Activated T-helper 2 cell treated with anti-CD3 and anti-CD28 coated beads, Interferon-gamma antibody, Interleukin-2, Interleukin-4, amounts not matched to agents 10 μg/mL and 5 μg/mL and 100 μg/mL, durations not matched to agents 14 hours and 24 hours and 36 hours (primary cell): ENCODE measurements at regions of chr12 and their contacts with region 1.

Region 1: DNA sequence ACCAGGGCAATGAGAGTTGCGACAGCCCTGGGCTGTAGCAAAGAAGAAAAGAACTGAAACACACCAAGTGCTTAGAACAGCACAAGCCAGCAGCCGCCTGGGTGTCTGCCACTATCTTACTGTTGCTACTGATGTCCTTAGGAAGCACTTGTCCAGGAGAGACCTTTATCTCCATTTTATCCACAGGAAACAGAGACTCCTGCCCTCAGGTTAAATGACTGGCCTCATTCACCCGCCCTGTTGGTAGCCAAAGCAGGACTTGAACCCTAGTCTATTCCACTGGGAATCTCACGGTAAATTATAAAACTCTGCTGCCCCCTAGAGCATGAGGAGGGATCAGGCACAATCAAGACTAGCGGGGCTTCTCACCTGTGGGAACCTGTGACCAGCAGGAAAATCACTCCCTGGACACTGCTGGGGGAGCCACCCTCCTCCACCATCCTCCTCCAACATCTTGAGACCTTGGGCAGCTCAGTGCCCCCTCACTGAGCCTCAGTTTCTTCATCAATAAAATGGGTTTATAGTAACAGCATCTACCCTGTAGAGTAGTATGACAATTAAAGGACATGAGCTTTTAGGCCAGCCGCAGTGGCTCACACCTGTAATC is 20.5 kb upstream of the TESC start:
- DNase-seq: no peak
- H3K4me3 Mint-ChIP-seq: no peak overlapping the region
- H3K27ac Mint-ChIP-seq: no peak overlapping the region
- H3K4me1 Mint-ChIP-seq: no peaks in the 10 kb centered on the region
- H3K27me3 Mint-ChIP-seq: no peaks in the 10 kb centered on the region

Region 2: DNA sequence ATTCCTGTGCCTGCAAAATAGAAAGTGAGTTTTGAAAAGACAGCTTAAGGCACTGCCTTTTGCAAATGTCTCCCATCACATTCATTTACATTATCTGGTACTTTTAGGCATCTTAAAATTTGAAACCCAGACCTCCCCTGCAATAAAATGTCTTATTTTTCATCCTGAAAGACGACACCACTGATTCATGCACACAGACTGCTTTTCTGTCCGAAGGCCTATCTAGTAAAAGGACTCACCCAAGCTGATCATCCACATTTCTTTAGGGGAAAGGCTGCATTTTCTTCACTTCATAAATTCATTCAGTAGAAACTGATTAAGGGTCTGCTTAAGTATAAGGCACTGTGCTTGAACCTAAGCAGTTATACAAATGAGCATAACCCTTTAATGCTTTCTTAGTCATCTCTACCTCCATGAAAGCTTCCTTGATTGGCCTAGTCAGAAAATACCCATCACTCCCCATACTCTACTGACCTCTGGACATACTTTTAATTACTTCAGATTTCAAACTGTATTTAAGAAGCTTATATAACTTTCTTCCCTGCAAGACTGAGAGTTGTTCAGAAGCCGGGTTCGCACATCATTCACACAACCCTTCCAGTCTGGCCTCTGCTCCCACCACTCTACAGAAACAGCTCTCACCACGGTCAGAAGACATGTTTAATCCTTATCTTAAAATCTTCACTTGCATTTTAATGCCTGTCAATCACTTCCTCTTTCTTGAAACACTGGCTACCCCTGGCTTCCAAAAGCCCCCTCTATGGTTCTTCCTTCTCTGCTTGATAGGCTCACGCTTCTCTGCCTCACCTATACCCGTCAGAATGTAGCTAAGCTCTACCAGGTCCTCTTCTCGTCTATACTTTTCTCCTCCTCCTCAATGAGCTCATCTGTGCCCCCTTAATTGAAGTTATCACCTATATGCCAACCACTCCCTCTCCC is 1130.8 kb before region 1 on chr12:
- intact Hi-C with region 1: no loop called
- DNase-seq: no peak
- H3K4me3 Mint-ChIP-seq: no peak overlapping the region
- H3K27ac Mint-ChIP-seq: no peak overlapping the region
- H3K4me1 Mint-ChIP-seq: peaks cover 23% of the 10 kb centered on the region
- H3K27me3 Mint-ChIP-seq: no peaks in the 10 kb centered on the region

Region 3: GRCh38 chr12:116703214-116703795 is 416.4 kb before region 1 on chr12:
- intact Hi-C with region 1: loop called (anchors 1 kb)
- DNase-seq: peak; percentile 51
- H3K4me3 Mint-ChIP-seq: no peak overlapping the region
- H3K27ac Mint-ChIP-seq: no peak overlapping the region
- H3K4me1 Mint-ChIP-seq: peaks cover 2% of the 10 kb centered on the region
- H3K27me3 Mint-ChIP-seq: peaks cover 8% of the 10 kb centered on the region

Region 4: GRCh38 chr12:117025481-117026151 is 94.1 kb before region 1 on chr12:
- intact Hi-C with region 1: loop called (anchors 1 kb)
- DNase-seq: peak; percentile 22
- H3K4me3 Mint-ChIP-seq: no peak overlapping the region
- H3K27ac Mint-ChIP-seq: peak overlapping the region; percentile 61
- H3K4me1 Mint-ChIP-seq: peaks cover 3% of the 10 kb centered on the region
- H3K27me3 Mint-ChIP-seq: no peaks in the 10 kb centered on the region